Colonic mucosa (tissue), 4 donors: ENCODE measurements at regions of chr11 and their contacts with region 1.

Region 1: DNA sequence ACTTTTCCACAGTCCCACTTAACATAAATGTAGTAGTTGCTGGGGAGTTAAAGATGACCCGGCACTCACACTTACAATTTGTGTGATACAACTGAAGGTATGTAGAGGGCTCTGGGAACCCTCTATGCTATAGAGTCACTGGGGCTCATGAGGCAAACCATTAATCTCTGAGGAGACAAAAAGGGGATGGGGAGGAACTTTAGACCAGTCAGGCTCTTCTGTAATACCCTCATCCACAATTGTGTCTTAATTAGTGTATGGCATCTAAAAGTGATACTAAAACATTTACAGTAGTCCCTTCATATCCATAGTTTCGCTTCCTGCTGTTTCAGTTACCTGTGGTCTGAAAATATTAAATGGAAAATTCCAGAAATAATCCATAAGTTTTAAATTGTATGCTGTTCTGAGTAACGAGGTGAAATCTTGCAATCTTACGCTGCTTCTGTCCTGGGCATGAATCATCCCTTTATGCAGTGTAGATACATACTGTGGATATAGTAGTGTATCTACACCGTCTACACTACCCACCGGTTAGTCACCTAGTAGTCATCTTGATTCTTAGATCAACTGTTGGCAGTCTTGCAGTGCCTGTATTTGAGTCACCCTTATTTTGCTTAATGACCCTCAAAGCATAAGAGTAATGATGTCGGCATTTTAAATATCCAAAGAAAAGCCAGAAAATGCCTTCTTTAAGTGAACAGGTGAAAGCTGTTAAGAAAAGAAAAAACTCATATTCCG is 12.2 kb downstream of the CBL start:
- DNase-seq: no peak
- H3K4me3 ChIP-seq: no peak overlapping the region
- H3K27ac ChIP-seq: no peak overlapping the region
- H3K4me1 ChIP-seq: no peaks in the 10 kb centered on the region
- H3K27me3 ChIP-seq: no peaks in the 10 kb centered on the region
- CTCF ChIP-seq: no peak

Region 2: DNA sequence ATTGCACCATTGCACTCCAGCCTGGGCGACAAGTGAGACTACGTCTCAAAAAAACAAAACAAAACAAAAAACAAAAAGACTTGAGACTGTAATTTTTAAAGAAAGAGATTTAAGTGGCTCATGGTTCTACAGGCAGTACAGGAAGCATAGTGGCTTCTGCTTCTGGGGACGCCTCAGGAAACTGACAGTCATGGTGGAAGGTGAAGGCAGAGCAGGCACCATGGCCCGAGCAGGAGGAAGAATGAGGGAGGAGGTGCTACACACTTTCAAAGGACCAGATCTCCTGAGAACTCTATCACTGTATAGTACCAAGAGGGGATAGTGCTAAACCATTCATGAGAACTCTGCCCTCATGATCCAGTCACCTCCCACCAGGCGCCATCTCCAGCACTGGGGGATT is 39.9 kb after region 1 on chr11:
- intact Hi-C with region 1: loop called (anchors 5 kb)
- DNase-seq: no peak
- H3K4me3 ChIP-seq: no peak overlapping the region
- H3K27ac ChIP-seq: no peak overlapping the region
- H3K4me1 ChIP-seq: no peaks in the 10 kb centered on the region
- H3K27me3 ChIP-seq: no peaks in the 10 kb centered on the region
- CTCF ChIP-seq: no peak